Endothelial cell of umbilical vein (primary cell): ENCODE measurements at regions of chr13 and their contacts with region 1.

Region 1: GRCh38 chr13:105291987-105292386 is 1243.5 kb downstream of the EFNB2 start:
- DNase-seq: no peak
- H3K4me3 ChIP-seq: no peak overlapping the region
- H3K27ac ChIP-seq: no peak overlapping the region
- H3K4me1 ChIP-seq: no peaks in the 10 kb centered on the region
- H3K27me3 ChIP-seq: no peaks in the 10 kb centered on the region
- CTCF ChIP-seq: no peak
- POLR2A ChIP-seq: no peak

Region 2: DNA sequence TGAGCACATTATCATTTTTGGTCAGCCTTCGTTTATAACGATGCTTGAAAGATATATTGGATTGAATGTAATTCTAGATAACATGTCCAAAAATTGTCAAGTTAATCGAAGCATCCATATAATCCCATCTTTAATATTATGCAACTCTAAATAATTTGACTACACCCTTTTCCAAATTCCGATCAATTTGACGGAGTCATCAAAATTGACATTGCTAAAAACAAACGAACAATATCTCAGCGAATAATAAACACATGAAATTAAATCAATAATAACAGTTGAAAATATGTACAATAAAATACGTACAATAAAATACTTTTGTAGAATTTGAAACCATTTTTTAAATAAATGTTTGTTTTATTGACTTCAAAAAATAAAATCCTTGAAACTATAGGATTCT is 272.9 kb before region 1 on chr13:
- CTCF ChIA-PET with region 1: no interaction called
- POLR2A ChIA-PET with region 1: no interaction called
- dilution Hi-C with region 1: no loop called
- intact Hi-C with region 1: no loop called
- DNase-seq: no peak
- H3K4me3 ChIP-seq: no peak overlapping the region
- H3K27ac ChIP-seq: no peak overlapping the region
- H3K4me1 ChIP-seq: no peaks in the 10 kb centered on the region
- H3K27me3 ChIP-seq: no peaks in the 10 kb centered on the region
- CTCF ChIP-seq: no peak
- POLR2A ChIP-seq: no peak

Region 3: GRCh38 chr13:105070452-105070851 is 221.5 kb before region 1 on chr13:
- CTCF ChIA-PET with region 1: no interaction called
- POLR2A ChIA-PET with region 1: no interaction called
- dilution Hi-C with region 1: no loop called
- intact Hi-C with region 1: no loop called
- DNase-seq: no peak
- H3K4me3 ChIP-seq: no peak overlapping the region
- H3K27ac ChIP-seq: no peak overlapping the region
- H3K4me1 ChIP-seq: no peaks in the 10 kb centered on the region
- H3K27me3 ChIP-seq: no peaks in the 10 kb centered on the region
- CTCF ChIP-seq: no peak
- POLR2A ChIP-seq: no peak

Region 4: GRCh38 chr13:105940882-105941281 is 648.9 kb after region 1 on chr13:
- CTCF ChIA-PET with region 1: no interaction called
- POLR2A ChIA-PET with region 1: interaction called, 12 read pairs
- dilution Hi-C with region 1: no loop called
- intact Hi-C with region 1: no loop called
- DNase-seq: no peak
- H3K4me3 ChIP-seq: no peak overlapping the region
- H3K27ac ChIP-seq: no peak overlapping the region
- H3K4me1 ChIP-seq: no peaks in the 10 kb centered on the region
- H3K27me3 ChIP-seq: no peaks in the 10 kb centered on the region
- CTCF ChIP-seq: no peak
- POLR2A ChIP-seq: no peak